ENCODE measurements at regions of chr1 and their contacts with region 1.

Region 1: GRCh38 chr1:63773815-63774616 is at the start of gene ROR1:
- DNase-seq: peak; percentile 74 to 97 (median 84)

Region 2: GRCh38 chr1:63635681-63636080 is 138.3 kb before region 1 on chr1:
- intact Hi-C with region 1: no loop called
- DNase-seq: no peak

Region 3: GRCh38 chr1:63691701-63692425 is 82.2 kb before region 1 on chr1:
- intact Hi-C with region 1: loop called (anchors 10 kb)
- DNase-seq: peak in 2 of 10 donors; percentile 31 to 51

Region 4: GRCh38 chr1:63917571-63918417 is 143.8 kb after region 1 on chr1:
- intact Hi-C with region 1: loop called (anchors 5 kb)
- DNase-seq: no peak